ENCODE measurements at regions of chr16 and their contacts with region 1.

Region 1: DNA sequence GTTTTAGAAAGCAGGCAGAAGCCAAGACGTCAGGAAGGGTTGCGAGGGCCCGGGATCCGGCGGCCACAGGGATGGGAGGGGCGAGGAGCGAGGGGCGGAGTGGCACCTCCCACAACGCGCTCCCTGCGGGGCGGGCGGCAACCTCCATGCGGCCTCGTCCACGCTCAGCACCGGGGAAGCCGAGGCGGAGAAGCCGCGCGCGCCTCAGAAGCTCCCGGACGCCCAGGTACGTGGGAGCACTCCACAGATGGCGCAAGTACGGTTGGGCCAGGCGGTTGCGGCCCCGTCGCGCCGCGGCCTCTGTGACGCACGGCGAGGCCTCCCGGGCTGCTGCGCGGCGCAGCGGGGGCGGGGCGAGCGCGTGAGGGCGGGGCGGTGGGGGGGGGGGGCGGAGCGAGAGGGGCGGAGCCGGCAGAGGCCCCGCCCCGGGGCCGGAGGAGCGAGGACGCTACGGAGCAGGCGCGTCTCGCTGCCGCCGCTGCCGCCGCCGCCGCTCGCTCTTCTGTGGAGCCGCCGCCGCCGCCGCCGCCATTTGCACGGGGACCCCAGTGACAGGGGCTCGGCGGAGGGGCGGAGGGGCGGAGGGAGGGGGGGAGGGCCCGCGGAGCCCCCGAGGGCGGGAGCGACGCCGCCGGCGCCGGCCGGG is at the start of gene TENT4B:
- DNase-seq: peak; percentile 86
- H3K4me3 Mint-ChIP-seq: peak within 1 kb of the TSS; percentile 92
- H3K27ac Mint-ChIP-seq: peak within 1 kb of the TSS; percentile 94
- H3K4me1 Mint-ChIP-seq: peaks cover 41% of the 10 kb centered on the region
- H3K27me3 Mint-ChIP-seq: no peaks in the 10 kb centered on the region
- total RNA-seq, gene TENT4B: 19.8 and 20.0 TPM in 2 replicates

Region 2: DNA sequence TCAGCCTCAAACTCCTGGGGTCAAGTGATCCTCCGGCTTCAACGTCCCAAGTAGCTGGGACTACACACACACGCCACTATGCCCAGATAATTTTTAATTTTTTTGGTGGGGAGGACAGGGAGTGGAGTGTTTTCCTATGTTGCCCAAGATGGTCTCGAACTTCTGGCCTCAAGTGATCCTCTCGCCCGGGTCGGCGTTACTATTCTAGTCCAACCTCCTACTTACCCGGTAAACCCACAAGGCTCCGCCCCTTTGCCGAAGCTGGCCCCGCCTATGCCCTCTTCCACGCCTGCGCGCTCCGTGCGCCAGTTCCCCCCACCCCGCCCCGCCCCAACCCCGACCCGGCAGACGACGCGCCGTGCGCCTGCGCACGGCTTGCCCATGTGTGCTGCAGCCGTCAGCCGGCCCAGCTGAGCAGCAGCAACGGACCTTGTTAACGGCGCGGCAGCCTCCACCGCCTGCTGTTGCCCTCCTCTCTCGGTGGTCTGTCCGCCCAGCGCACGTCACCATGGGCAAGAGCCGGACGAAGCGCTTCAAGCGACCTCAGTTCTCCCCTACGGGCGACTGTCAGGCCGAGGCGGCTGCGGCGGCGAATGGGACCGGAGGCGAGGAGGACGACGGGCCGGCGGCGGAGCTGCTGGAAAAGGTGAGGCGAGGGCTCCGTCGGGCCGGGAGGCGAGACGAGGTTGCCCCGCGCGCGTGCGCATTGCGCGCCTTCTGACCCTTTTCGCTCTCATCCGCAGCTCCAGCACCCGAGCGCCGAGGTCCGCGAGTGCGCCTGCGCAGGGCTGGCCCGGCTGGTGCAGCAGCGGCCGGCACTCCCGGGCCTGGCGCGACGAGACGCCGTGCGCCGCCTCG is 87.1 kb before region 1 on chr16 and contains the start of gene HEATR3:
- intact Hi-C with region 1: loop called (anchors 1 kb)
- DNase-seq: peak; percentile 93
- H3K4me3 Mint-ChIP-seq: peak within 1 kb of the TSS; percentile 85
- H3K27ac Mint-ChIP-seq: peak within 1 kb of the TSS; percentile 90
- H3K4me1 Mint-ChIP-seq: peaks cover 39% of the 10 kb centered on the region
- H3K27me3 Mint-ChIP-seq: no peaks in the 10 kb centered on the region
- total RNA-seq, gene HEATR3: 29.1 and 30.7 TPM in 2 replicates

Region 3: DNA sequence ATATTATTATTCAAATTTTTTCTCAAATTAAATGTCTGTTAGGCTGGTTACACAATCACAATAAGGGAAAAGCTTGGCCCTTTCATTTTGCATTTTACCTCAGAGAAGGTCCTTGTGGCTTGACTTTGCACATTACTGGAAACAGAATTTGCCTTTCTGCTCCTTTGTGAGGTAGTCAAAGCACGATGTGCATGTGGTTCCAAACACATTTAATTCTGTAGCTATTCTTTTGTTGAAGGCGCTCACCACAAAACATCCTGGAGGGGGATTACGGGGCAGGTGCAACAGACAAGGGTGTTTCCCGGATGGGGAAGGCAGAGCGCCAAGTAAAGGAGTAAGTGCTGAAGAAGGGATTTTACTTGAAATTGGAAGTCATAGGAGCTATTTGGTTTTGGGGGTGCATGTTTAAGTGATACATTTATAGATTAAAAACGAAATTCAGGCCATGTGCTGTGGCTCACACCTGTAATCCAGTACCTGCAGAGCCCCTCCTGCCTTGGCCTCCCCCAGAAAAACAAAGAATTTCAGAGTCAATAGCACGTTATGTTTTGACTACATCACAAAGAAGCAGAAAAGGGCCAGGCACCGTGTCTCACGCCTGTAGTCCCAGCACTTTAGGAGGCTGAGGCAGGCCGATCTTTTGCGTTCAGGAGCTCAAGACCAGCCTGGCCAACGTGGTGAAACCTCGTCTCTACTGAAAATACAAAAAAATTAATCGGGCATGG is 31.0 kb before region 1 on chr16:
- intact Hi-C with region 1: loop called (anchors 1 kb)
- DNase-seq: peak; percentile 63
- H3K4me3 Mint-ChIP-seq: peak overlapping the region; percentile 48
- H3K27ac Mint-ChIP-seq: peak overlapping the region; percentile 85
- H3K4me1 Mint-ChIP-seq: peaks cover 55% of the 10 kb centered on the region
- H3K27me3 Mint-ChIP-seq: no peaks in the 10 kb centered on the region

Region 4: DNA sequence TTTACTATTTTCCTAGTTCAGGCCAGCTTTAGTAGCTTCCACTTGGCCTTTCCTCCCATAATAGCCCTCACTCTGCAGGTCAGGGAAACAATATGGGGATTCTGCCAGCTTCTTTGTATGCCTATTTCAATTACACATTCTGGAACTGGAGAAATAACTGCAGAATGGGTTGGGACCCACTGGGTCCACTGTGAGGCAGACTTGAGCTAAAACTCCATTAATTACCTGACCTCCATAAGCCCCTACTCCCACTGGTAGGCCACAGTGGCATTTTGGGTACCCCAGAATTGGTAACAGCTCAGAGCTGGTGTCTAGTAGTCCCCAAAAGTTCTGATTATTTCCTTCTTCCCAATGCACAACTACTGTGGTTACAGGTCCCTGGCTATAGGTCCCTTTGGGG is 16.5 kb before region 1 on chr16:
- intact Hi-C with region 1: no loop called
- DNase-seq: no peak
- H3K4me3 Mint-ChIP-seq: no peak overlapping the region
- H3K27ac Mint-ChIP-seq: no peak overlapping the region
- H3K4me1 Mint-ChIP-seq: peaks cover 7% of the 10 kb centered on the region
- H3K27me3 Mint-ChIP-seq: peaks cover 2% of the 10 kb centered on the region

Region 5: GRCh38 chr16:50335196-50335958 is 182.4 kb after region 1 on chr16:
- intact Hi-C with region 1: loop called (anchors 5 kb)
- DNase-seq: no peak
- H3K4me3 Mint-ChIP-seq: peak overlapping the region; percentile 37
- H3K27ac Mint-ChIP-seq: peak overlapping the region; percentile 87
- H3K4me1 Mint-ChIP-seq: peaks cover 48% of the 10 kb centered on the region
- H3K27me3 Mint-ChIP-seq: no peaks in the 10 kb centered on the region

Region 6: GRCh38 chr16:50548125-50548908 is 395.4 kb after region 1 on chr16 and contains the start of gene NKD1:
- intact Hi-C with region 1: loop called (anchors 1 kb)
- DNase-seq: peak; percentile 65
- H3K4me3 Mint-ChIP-seq: peak within 1 kb of the TSS; percentile 91
- H3K27ac Mint-ChIP-seq: peak within 1 kb of the TSS; percentile 59
- H3K4me1 Mint-ChIP-seq: peaks cover 14% of the 10 kb centered on the region
- H3K27me3 Mint-ChIP-seq: peaks cover 37% of the 10 kb centered on the region
- total RNA-seq, gene NKD1: 1.1 and 1.4 TPM in 2 replicates

Region 7: GRCh38 chr16:50741808-50742575 is 589.1 kb after region 1 on chr16 and contains the start of gene CYLD:
- intact Hi-C with region 1: loop called (anchors 1 kb)
- DNase-seq: peak; percentile 100
- H3K4me3 Mint-ChIP-seq: peak within 1 kb of the TSS; percentile 86
- H3K27ac Mint-ChIP-seq: peak within 1 kb of the TSS; percentile 93
- H3K4me1 Mint-ChIP-seq: peaks cover 64% of the 10 kb centered on the region
- H3K27me3 Mint-ChIP-seq: no peaks in the 10 kb centered on the region
- total RNA-seq, gene CYLD: 219 and 223 TPM in 2 replicates

Measured in activated T-helper 1 cell treated with anti-CD3 and anti-CD28 coated beads, Interleukin-12 subunit alpha, Interleukin-12 subunit beta, Interleukin-2, Interleukin-4 antibody, amounts not matched to agents 30 ng/mL and 10 ng/mL and 1 ng/mL, durations not matched to agents 14 hours and 24 hours and 36 hours (primary cell).